CD8-positive, alpha-beta T cell (primary cell): ENCODE measurements at regions of chr18 and their contacts with region 1.

Region 1: DNA sequence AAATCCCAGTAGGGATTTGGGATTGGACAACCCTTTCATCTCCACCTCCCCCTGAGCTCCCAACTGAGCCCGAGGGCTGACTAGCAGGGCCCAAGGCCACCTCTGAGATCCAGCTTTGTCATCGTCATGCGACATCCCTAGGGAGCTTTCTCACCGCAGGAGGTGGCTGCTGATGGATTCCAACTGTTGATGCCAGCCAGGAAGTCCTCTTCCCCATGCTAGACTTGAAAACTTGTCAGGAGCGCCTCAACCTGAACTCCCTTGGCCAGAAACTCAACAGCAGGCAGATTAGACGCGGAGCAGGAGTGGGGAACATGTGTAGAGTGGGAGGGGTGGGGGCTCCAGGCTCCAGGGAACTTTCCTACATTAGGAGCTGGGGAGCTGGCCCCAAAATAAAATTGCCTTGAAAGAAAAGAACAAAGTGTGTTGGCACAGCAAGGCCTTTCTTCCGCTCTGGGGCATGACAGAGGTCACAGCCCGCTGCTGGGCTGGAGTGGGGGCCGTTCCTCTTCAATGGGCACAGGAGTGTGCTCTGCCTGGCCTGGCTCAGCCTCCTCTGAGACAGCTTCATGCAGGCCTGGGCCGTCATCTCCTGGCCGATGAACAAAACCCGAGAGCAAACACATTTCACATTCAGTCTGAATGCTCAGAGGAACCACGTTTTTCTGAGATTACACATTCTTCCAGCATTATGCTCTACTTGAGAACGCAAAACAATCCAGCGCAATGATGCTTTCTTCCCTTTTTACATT is 34.5 kb downstream of the EMILIN2 start:
- DNase-seq: no peak
- ATAC-seq: no peak
- H3K4me3 ChIP-seq: no peak overlapping the region
- H3K4me3 Mint-ChIP-seq: peak overlapping the region; percentile 50
- H3K27ac ChIP-seq: peak overlapping the region in 1 of 2 experiments; percentile 74
- H3K27ac Mint-ChIP-seq: peak overlapping the region; percentile 55
- H3K4me1 ChIP-seq: peaks cover 39% of the 10 kb centered on the region
- H3K4me1 Mint-ChIP-seq: peaks cover 35% of the 10 kb centered on the region
- H3K27me3 ChIP-seq: no peaks in the 10 kb centered on the region
- H3K27me3 Mint-ChIP-seq: no peaks in the 10 kb centered on the region
- CTCF ChIP-seq: no peak

Region 2: DNA sequence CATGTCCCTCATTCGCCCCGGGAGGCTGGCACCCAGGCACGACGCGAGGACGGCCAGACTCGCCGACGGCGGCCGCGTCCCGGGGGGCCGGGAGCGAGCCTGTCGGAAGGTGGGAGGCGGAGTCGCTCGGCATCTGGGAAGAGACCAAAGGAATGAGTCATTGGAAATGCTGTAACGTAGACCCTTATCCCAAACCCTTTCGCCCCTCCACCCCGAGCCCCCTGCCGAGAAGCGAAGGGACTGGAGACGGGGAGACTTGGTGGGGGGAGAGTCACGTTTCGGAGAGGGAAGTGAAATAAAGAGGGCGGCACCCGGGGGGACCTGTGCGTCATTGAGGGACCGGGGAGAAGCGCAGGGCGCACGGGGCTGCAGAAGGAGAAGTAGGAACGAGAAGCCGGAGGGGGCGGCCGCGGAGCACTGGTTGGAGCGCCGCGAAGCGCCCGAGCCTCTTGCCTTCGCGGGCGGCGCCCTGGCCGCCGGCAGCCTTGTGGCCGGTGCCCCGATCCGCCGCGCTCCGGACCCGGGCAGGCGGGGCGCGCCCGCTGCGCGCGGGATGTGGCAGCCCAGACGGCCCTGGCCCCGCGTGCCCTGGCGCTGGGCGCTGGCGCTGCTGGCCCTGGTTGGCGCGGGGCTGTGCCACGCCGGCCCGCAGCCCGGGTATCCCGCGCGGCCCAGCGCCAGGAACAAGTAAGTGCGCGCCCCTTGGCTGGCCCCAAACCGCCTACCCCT is 34.5 kb before region 1 on chr18 and contains the start of gene EMILIN2:
- CTCF ChIA-PET with region 1: no interaction called
- POLR2A ChIA-PET with region 1: interaction called, 3 read pairs
- intact Hi-C with region 1: loop called in 1 of 2 experiments (anchors 5 kb)
- DNase-seq: peak in 8 of 9 experiments; percentile 9 to 61 (median 47)
- ATAC-seq: peak; percentile 52
- H3K4me3 ChIP-seq: peak within 1 kb of the TSS; percentile 46 to 69
- H3K4me3 Mint-ChIP-seq: peak within 1 kb of the TSS; percentile 88
- H3K27ac ChIP-seq: no peak within 1 kb of the TSS
- H3K27ac Mint-ChIP-seq: no peak within 1 kb of the TSS
- H3K4me1 ChIP-seq: peaks cover 9% of the 10 kb centered on the region
- H3K4me1 Mint-ChIP-seq: peaks cover 19% of the 10 kb centered on the region
- H3K27me3 ChIP-seq: peaks cover 6 to 17% of the 10 kb centered on the region in 2 experiments
- H3K27me3 Mint-ChIP-seq: peaks cover 47% of the 10 kb centered on the region
- CTCF ChIP-seq: no peak
- total RNA-seq, gene EMILIN2: 1.6 to 1.7 TPM

Region 3: DNA sequence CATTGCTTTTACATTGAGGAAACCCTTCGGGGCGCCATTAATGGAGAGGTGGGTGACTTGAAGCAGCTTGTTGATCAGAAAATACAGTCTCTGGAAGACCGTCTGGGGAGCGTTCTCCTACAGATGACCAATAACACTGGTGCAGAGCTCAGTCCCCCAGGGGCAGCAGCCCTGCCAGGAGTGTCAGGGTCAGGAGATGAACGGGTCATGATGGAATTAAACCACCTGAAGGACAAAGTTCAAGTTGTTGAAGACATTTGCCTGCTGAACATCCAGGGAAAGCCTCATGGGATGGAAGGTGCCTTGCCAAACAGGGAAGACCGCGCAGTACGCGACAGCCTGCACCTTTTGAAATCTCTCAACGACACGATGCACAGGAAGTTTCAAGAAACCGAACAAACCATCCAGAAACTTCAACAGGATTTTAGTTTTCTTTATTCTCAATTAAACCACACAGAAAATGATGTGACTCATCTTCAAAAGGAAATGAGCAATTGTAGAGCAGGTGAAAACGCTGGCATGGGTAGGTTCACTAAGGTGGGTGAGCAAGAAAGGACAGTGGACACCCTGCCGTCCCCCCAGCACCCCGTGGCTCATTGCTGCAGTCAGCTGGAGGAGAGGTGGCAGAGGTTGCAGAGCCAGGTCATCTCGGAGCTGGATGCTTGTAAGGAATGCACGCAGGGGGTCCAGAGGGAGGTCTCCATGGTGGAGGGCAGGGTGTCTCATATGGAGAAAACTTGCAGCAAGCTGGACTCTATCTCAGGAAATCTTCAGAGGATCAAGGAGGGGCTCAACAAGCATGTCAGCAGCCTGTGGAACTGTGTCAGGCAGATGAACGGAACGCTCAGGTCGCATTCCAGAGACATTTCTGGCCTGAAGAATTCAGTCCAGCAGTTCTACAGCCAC is 10.5 kb after region 1 on chr18:
- CTCF ChIA-PET with region 1: no interaction called
- POLR2A ChIA-PET with region 1: interaction called, 13 read pairs
- intact Hi-C with region 1: no loop called
- DNase-seq: peak in 2 of 9 experiments; percentile 22 to 51
- ATAC-seq: peak; percentile 49
- H3K4me3 ChIP-seq: peak overlapping the region in 1 of 2 experiments; percentile 27
- H3K4me3 Mint-ChIP-seq: peak overlapping the region; percentile 49
- H3K27ac ChIP-seq: no peak overlapping the region
- H3K27ac Mint-ChIP-seq: peak overlapping the region; percentile 75
- H3K4me1 ChIP-seq: peaks cover 38% of the 10 kb centered on the region
- H3K4me1 Mint-ChIP-seq: peaks cover 35% of the 10 kb centered on the region
- H3K27me3 ChIP-seq: no peaks in the 10 kb centered on the region
- H3K27me3 Mint-ChIP-seq: no peaks in the 10 kb centered on the region
- CTCF ChIP-seq: no peak

Region 4: GRCh38 chr18:3148930-3149535 is 267.8 kb after region 1 on chr18:
- CTCF ChIA-PET with region 1: no interaction called
- POLR2A ChIA-PET with region 1: no interaction called
- intact Hi-C with region 1: no loop called
- DNase-seq: no peak
- ATAC-seq: no peak
- H3K4me3 ChIP-seq: no peak overlapping the region
- H3K4me3 Mint-ChIP-seq: no peak overlapping the region
- H3K27ac ChIP-seq: no peak overlapping the region
- H3K27ac Mint-ChIP-seq: no peak overlapping the region
- H3K4me1 ChIP-seq: no peaks in the 10 kb centered on the region
- H3K4me1 Mint-ChIP-seq: peaks cover 4% of the 10 kb centered on the region
- H3K27me3 ChIP-seq: no peaks in the 10 kb centered on the region
- H3K27me3 Mint-ChIP-seq: no peaks in the 10 kb centered on the region
- CTCF ChIP-seq: no peak